GM12878 (cell line): ENCODE measurements at regions of chrX and their contacts with region 1.

Region 1: GRCh38 chrX:11363069-11363594 is 69.9 kb downstream of the AMELX start:
- DNase-seq: peak; percentile 67
- ATAC-seq: peak; percentile 99
- H3K4me3 ChIP-seq: no peak overlapping the region
- H3K27ac ChIP-seq: peak overlapping the region; percentile 22; the same call in 1 of the 2 replicates
- H3K4me1 ChIP-seq: no peaks in the 10 kb centered on the region
- H3K27me3 ChIP-seq: no peaks in the 10 kb centered on the region
- CTCF ChIP-seq: no peak; a peak in 1 of 6 replicates
- EP300 ChIP-seq: peak; percentile 79 to 91
- POLR2A ChIP-seq: no peak
- RAD21 ChIP-seq: no peak

Region 2: GRCh38 chrX:10821293-10821692 is 541.8 kb before region 1 on chrX:
- CTCF ChIA-PET with region 1: no interaction called
- POLR2A ChIA-PET with region 1: no interaction called
- RAD21 ChIA-PET with region 1: no interaction called
- SMC1A ChIA-PET with region 1: no interaction called
- in situ Hi-C with region 1: no loop called
- intact Hi-C with region 1: no loop called
- DNase-seq: peak; percentile 7
- ATAC-seq: peak; percentile 91
- H3K4me3 ChIP-seq: no peak overlapping the region
- H3K27ac ChIP-seq: no peak overlapping the region
- H3K4me1 ChIP-seq: no peaks in the 10 kb centered on the region
- H3K27me3 ChIP-seq: no peaks in the 10 kb centered on the region
- CTCF ChIP-seq: no peak
- EP300 ChIP-seq: no peak
- POLR2A ChIP-seq: no peak
- RAD21 ChIP-seq: no peak

Region 3: GRCh38 chrX:11244636-11245035 is 118.5 kb before region 1 on chrX:
- CTCF ChIA-PET with region 1: no interaction called
- POLR2A ChIA-PET with region 1: no interaction called
- RAD21 ChIA-PET with region 1: no interaction called
- SMC1A ChIA-PET with region 1: no interaction called
- in situ Hi-C with region 1: no loop called
- intact Hi-C with region 1: no loop called
- DNase-seq: no peak
- ATAC-seq: no peak
- H3K4me3 ChIP-seq: no peak overlapping the region
- H3K27ac ChIP-seq: no peak overlapping the region
- H3K4me1 ChIP-seq: no peaks in the 10 kb centered on the region
- H3K27me3 ChIP-seq: no peaks in the 10 kb centered on the region
- CTCF ChIP-seq: no peak
- EP300 ChIP-seq: no peak
- POLR2A ChIP-seq: no peak
- RAD21 ChIP-seq: no peak

Region 4: GRCh38 chrX:11341274-11342201 is 21.6 kb before region 1 on chrX:
- CTCF ChIA-PET with region 1: interaction called, 5 read pairs
- POLR2A ChIA-PET with region 1: no interaction called
- RAD21 ChIA-PET with region 1: interaction called, 3 read pairs
- SMC1A ChIA-PET with region 1: interaction called, 4 read pairs
- in situ Hi-C with region 1: no loop called
- intact Hi-C with region 1: loop called (anchors 1 kb)
- DNase-seq: peak; percentile 17
- ATAC-seq: peak; percentile 86
- H3K4me3 ChIP-seq: no peak overlapping the region
- H3K27ac ChIP-seq: no peak overlapping the region
- H3K4me1 ChIP-seq: 0 out of 2 replicates have a peak, but pooled peaks cover 3% of the 10 kb centered on the region
- H3K27me3 ChIP-seq: no peaks in the 10 kb centered on the region
- CTCF ChIP-seq: no peak
- EP300 ChIP-seq: peak; percentile 39 to 74; a peak in 3 of 4 replicates
- POLR2A ChIP-seq: no peak
- RAD21 ChIP-seq: no peak